ENCODE measurements at regions of chr12 and their contacts with region 1.

Region 1: DNA sequence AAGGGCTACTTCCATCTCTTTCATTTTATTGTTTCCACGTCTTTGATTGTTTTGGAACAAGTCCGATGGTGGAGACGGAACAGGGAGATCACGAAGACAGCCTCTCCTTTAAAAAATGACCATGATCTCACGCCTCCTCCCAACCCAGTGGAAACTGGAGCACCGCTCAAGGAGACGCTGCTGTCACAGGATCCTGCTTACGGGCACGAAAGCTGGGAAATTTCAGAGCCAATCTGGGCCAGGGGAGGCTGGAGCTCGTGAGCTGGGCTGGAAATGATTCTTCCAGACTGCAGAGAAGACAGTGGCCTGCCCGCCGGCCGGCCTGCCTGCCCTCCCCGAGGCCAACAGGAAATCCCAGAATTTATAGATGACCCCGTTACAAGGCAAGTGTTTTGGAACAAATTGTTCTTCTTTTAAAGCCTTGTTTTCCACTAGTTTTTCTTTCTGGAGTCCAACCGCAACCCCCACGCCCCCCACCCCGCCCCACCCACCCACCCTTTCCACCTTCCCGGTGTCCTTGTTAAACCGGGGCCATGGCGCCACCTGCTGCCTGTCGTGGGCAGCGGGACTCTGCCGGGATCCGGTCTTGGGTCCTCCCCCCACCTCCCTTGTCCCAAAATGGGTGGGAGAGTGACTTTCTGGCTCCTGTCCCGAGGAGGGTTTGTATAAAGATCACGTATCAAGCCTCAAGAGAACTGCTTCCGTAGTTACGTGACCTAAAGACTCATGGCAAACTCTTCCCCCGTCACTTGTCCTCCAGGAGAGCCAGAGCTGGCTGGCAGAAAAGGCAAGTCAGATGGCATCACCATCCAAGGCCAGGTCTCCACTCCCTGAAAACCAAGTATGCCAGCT is 40.3 kb downstream of the MAP1LC3B2 start:
- DNase-seq: peak; percentile 71 to 86
- ATAC-seq: peak; percentile 89

Region 2: DNA sequence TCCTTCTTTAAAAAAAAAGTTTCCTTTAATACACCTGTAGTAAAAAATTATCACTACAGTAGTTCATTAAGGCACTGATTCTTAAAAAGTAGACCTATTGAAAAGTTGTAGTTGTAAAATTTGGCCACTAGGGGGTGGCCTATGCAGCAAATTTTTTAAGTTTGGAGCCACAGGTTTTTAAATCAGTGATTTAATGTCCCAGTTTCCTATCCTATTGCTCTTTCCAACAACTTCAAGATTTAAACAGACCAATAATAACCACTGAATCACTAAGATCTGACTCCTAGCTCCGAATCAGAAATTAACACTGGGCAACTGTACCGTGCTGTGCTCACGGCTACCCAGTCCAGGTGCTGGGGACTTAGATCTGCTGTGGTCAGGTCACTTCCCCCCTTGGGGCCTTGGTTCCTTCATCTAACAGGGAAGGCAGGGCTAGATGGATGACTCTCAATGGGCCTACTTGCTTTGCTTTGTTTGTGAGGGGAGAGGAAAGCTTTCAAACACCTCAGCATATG is 601.3 kb before region 1 on chr12:
- intact Hi-C with region 1: loop called in 1 of 2 experiments (anchors 10 kb)
- DNase-seq: peak in 1 of 2 donors; percentile 9
- ATAC-seq: peak; percentile 45

Region 3: DNA sequence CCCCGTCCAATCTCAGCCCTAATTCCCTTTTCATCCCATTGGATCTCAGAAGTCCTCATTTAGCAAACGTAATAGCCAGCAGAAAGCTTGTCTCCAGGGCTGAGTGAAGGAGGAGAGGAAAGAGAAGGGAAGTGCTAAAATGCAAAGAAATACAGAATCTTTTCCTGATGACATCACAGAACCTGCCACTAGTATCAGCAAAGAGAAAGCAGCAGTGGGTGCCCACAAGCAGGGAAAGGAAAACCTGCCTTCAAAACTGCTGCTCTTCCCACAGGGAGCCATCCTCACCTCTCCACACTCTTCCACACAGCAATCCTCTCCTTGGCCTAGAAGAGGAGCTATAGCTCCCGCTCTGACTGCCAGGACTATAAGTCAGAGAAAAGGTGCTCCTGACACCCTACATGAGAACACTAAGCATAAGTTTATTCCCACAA is 333.3 kb before region 1 on chr12:
- intact Hi-C with region 1: loop called in 1 of 2 experiments (anchors 10 kb)
- DNase-seq: no peak
- ATAC-seq: peak; percentile 37

Region 4: GRCh38 chr12:116282371-116283286 is 316.9 kb before region 1 on chr12:
- intact Hi-C with region 1: loop called in 1 of 2 experiments (anchors 10 kb)
- DNase-seq: no peak
- ATAC-seq: no peak

Region 5: DNA sequence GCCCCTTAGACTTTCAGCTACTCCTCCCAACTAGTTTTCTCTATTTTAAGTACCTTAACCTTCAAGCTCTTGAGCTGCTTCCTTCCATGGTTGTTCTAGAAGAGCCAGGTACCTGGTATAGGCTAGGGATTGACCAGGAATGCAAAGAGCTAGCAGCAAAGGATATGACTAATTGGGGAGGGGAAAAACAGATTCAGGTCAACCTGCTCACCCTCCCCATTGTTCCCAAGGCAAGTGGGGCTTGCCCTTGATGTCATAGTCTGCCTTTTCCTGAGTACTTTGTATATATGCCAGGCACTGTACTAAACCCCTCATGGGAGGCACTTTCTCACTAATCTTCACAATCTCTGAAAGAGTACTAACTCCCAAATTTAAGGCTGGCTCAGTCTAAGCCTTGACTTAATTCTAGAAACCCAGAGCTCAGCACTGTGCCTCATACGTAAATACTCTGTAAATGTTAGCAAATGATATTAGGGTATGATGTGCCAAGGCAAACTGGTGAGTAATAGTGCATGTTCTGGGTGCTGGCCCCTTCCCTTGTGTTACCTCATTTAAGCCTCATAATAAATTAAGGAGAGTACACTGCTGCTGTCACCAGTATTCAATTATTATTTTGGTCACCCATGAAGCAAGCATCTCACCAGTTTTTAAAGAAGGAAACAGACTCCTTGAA is 1819.0 kb after region 1 on chr12:
- intact Hi-C with region 1: no loop called
- DNase-seq: no peak
- ATAC-seq: no peak

Measured in left colon (tissue), 2 donors.